Activated CD8-positive, alpha-beta T cell treated with anti-CD3 and anti-CD28 coated beads, Interleukin-2, amount 10 ng/mL, durations not matched to agents 7 days and 5 days (primary cell): ENCODE measurements at regions of chr12 and their contacts with region 1.

Region 1: DNA sequence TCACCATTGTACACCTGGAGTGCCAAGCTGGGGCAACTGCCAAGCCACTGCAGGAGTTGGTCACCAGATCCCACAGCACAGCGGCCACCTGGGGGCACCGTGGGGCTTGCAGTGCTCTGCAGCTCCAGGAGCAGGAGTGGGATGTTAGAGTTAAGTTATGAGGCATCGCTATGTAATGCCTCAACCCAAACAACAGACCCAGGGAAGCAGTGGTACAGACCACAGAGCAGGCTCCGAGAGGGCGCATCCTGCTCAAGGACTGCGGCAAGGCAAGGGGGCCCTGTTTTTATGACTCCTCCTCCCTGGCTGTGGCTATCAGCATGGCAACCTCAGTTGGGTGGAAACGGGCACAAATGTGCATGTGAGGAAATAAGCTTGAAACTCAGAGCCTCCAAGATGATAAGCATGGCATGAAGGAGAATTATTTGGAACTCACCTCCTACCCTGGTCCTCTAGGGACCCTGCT is 63.1 kb downstream of the ARL6IP4 start:
- DNase-seq: peak; percentile 90
- ATAC-seq: peak; percentile 99
- H3K4me3 Mint-ChIP-seq: peak overlapping the region; percentile 26
- H3K27ac Mint-ChIP-seq: peak overlapping the region; percentile 77
- H3K4me1 Mint-ChIP-seq: peaks cover 36% of the 10 kb centered on the region
- H3K27me3 Mint-ChIP-seq: no peaks in the 10 kb centered on the region

Region 2: DNA sequence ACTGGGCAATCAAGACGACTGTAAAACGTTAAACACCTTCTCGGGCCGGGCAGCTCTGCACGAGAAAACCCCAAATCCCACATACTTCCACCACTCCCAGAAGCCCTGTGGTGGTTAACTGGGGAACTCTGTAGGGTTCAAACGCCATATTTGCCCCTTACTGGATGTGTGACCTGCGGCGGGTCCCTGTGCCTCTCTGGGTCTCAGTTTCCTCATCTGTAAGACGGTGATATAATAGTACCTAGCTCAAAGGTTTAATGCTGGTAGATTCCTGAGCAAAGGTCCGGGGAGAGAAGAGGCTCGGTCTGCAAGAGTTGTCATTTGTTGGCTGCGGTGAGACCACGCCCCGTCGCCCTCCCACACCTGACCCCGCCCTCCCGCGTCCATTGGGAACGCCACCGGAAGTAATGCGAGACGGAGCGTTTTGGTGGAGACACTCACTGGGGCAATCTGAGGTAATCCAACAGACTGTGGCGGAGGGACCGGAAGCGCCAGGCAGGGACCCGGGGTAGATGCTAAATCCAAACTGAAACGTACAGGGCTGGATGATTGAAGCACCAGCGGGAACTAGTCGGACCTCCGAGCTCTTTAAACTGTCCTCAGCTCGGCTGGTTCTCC is 69.2 kb before region 1 on chr12:
- CTCF ChIA-PET with region 1: interaction called, 6 read pairs
- POLR2A ChIA-PET with region 1: interaction called, 11 read pairs
- DNase-seq: peak; percentile 99
- ATAC-seq: peak; percentile 84
- H3K4me3 Mint-ChIP-seq: peak overlapping the region; percentile 99
- H3K27ac Mint-ChIP-seq: peak overlapping the region; percentile 100
- H3K4me1 Mint-ChIP-seq: peaks cover 40% of the 10 kb centered on the region
- H3K27me3 Mint-ChIP-seq: no peaks in the 10 kb centered on the region

Region 3: GRCh38 chr12:123141615-123142517 is 98.3 kb after region 1 on chr12:
- CTCF ChIA-PET with region 1: interaction called, 10 read pairs
- POLR2A ChIA-PET with region 1: no interaction called
- DNase-seq: no peak
- ATAC-seq: no peak
- H3K4me3 Mint-ChIP-seq: no peak overlapping the region
- H3K27ac Mint-ChIP-seq: no peak overlapping the region
- H3K4me1 Mint-ChIP-seq: peaks cover 17% of the 10 kb centered on the region
- H3K27me3 Mint-ChIP-seq: no peaks in the 10 kb centered on the region

Region 4: DNA sequence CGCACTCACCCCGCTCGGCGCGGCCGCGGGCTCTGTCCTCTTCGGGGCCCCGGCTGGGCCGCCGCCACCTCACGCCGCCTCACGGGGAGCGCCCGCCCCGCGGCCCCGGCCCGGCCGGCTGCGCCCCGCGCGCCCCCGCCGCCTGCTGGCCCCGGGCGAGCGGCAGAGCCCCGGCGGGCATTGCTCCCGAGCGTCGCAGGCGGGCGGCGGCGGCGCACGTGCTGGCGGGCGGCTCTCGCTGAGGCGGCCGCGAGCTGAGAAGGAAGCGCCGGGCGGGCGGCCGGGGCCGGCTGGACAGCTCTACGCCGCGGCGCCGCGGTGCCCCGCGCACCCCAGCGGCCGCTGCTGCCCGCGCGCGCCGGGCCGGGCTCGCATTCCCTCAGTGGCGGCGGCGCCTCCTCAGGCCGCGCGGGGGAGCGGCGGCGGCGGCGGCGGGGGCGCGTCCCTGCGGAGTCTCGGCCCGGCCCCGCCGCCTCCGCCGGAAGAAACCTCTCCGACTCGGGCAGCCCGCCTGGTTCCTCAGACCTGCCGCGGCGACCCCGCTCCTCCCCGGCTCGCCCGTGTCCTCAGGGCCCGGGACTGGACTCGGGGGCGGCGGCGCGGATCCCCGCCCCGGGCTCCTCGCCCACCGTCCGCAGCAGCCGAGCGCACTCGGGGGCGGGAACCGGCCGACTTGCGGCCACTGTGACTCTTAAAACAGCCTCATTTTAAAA is 107.3 kb after region 1 on chr12 and contains the start of gene PITPNM2:
- CTCF ChIA-PET with region 1: interaction called, 10 read pairs
- POLR2A ChIA-PET with region 1: interaction called, 5 read pairs
- DNase-seq: peak; percentile 68
- ATAC-seq: peak; percentile 88
- H3K4me3 Mint-ChIP-seq: peak within 1 kb of the TSS; percentile 78
- H3K27ac Mint-ChIP-seq: peak within 1 kb of the TSS; percentile 75
- H3K4me1 Mint-ChIP-seq: peaks cover 39% of the 10 kb centered on the region
- H3K27me3 Mint-ChIP-seq: peaks cover 10% of the 10 kb centered on the region
- total RNA-seq, gene PITPNM2: 17.7 to 18.3 TPM

Region 5: GRCh38 chr12:123223241-123223668 is 179.7 kb after region 1 on chr12:
- CTCF ChIA-PET with region 1: interaction called, 11 read pairs
- POLR2A ChIA-PET with region 1: interaction called, 5 read pairs
- DNase-seq: peak; percentile 79
- ATAC-seq: peak; percentile 96
- H3K4me3 Mint-ChIP-seq: peak overlapping the region; percentile 69
- H3K27ac Mint-ChIP-seq: peak overlapping the region; percentile 94
- H3K4me1 Mint-ChIP-seq: peaks cover 47% of the 10 kb centered on the region
- H3K27me3 Mint-ChIP-seq: no peaks in the 10 kb centered on the region